Left ventricle myocardium superior (tissue), 1 donor: ENCODE measurements at regions of chr2 and their contacts with region 1.

Region 1: GRCh38 chr2:112626604-112627059 is 19.1 kb upstream of the SLC20A1 start:
- DNase-seq: peak; percentile 77
- ATAC-seq: peak; percentile 81

Region 2: GRCh38 chr2:112658820-112659667 is 32.4 kb after region 1 on chr2:
- intact Hi-C with region 1: no loop called
- DNase-seq: no peak
- ATAC-seq: no peak

Region 3: GRCh38 chr2:112685271-112685884 is 58.7 kb after region 1 on chr2:
- intact Hi-C with region 1: loop called (anchors 10 kb)
- DNase-seq: no peak
- ATAC-seq: no peak

Region 4: DNA sequence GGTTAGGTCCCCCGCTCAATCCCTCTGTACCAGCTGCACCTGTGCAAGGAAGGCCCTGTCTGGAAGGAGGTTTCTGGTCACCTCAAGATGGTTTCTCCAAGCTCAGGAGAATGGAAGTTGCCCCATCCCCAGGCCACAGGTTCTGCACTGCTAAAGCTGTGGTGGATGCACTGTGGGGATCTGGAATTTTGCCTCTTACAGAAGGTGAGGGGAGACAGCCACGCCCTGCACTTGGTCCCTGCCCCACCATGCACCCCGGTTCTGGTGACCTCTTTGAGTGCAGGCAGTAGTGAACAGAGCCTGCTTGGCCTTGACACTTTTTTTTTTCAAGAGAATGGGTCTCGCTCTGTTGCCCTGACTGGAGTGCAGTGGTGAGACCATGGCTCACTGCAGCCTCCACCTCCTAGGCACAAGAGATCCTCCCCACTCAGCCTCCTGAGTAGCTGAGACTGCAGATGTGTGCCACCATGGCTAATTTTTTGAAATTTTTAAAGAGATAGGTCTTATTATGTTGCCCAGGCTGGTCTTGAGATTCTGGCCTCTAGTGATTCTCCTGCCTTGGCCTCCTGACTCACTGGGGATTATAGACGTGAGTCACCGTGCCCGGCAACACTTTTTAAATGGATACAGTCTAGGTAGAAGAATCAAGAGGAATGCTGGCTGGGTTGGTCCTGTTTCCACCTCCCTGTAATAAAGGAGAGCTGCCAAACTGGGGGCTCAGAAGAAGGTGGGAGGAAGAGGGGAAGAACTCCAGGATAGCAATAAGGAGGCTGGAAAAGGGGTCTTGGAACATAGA is 88.4 kb after region 1 on chr2:
- intact Hi-C with region 1: no loop called
- DNase-seq: no peak
- ATAC-seq: no peak

Region 5: DNA sequence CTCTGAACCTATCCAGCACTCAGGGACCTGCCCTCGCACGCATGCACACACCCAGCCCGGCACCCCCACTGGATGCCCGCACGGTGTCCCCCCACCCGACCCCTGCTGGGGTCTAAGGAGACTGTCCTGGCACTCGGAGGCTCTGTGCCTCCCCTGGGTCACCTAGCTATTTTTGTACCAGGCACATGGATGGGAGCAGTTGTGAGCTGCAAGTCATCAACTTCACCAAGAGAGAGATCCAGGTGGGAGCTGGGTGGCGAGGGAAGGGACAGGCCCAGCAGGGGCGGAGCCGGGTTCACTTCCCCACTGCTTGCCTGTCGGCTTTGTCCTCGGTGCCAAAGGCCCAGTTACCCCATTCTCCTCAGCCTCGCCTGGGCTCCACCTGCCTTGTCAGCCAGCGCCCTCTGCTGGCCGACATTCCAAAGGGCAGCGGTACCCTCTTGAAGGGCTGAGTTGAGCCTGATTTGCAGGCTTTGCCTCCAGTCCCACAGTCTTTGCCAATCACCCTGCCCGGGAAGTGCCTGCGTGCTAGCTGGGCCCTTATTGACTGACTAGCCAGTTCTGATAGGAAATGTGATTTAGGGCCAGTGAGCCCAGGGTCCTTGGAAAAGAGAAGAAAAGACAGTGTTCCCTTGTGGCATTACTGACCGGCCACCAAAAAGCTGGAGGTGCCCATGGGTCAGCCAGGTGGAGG is 100.0 kb after region 1 on chr2:
- intact Hi-C with region 1: loop called (anchors 2 kb)
- DNase-seq: peak; percentile 93
- ATAC-seq: peak; percentile 95